ENCODE measurements at regions of chr13 and their contacts with region 1.

Region 1: GRCh38 chr13:102845630-102846260 is at the start of gene ERCC5:
- DNase-seq: peak; percentile 90 to 92
- H3K4me3 ChIP-seq: peak within 1 kb of the TSS; percentile 90
- H3K27ac ChIP-seq: peak within 1 kb of the TSS; percentile 73
- H3K4me1 ChIP-seq: peaks cover 13% of the 10 kb centered on the region; the same call in 1 of the 2 replicates
- H3K27me3 ChIP-seq: no peaks in the 10 kb centered on the region
- CTCF ChIP-seq: no peak
- total RNA-seq, gene ERCC5: 33.9 and 38.2 TPM in 2 replicates

Region 2: DNA sequence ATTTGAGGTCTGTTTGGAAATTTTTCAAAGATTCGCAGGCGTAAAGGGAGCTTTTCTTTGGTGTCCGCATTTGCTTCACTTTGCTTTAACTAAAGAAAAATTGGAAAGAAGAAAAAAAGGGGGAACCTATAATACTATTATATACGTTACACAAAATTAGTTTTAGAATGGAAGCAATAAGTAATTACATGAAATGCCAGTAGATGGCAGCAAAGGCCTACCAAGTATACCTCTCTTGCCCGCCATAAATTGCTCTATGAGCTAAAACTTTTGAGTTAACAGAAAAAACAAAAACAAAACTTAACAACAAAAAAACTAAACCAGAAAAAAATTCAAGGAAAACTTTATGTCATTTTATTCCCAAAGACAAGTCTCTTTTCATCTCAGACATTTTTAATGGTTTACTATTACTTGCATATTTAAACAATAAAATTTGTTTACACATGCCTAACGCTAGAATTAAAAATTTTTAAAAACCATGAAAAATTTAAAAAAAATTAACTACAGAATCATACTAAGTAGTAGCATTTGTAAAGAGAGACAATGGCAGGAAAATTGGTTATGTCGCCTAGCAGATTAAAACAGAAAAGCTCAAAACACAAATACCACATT is 1700.8 kb before region 1 on chr13:
- CTCF ChIA-PET with region 1: no interaction called
- POLR2A ChIA-PET with region 1: no interaction called
- intact Hi-C with region 1: loop called (anchors 10 kb)
- DNase-seq: peak; percentile 7 to 57
- H3K4me3 ChIP-seq: no peak overlapping the region
- H3K27ac ChIP-seq: no peak overlapping the region
- H3K4me1 ChIP-seq: peaks cover 15% of the 10 kb centered on the region
- H3K27me3 ChIP-seq: no peaks in the 10 kb centered on the region
- CTCF ChIP-seq: peak; percentile 87

Region 3: GRCh38 chr13:102197193-102197592 is 648.6 kb before region 1 on chr13:
- CTCF ChIA-PET with region 1: no interaction called
- POLR2A ChIA-PET with region 1: no interaction called
- intact Hi-C with region 1: loop called (anchors 5 kb)
- DNase-seq: no peak
- H3K4me3 ChIP-seq: no peak overlapping the region
- H3K27ac ChIP-seq: no peak overlapping the region
- H3K4me1 ChIP-seq: peaks cover 4% of the 10 kb centered on the region; the same call in 1 of the 2 replicates
- H3K27me3 ChIP-seq: peaks cover 11% of the 10 kb centered on the region
- CTCF ChIP-seq: peak; percentile 32; the same call in 1 of the 2 replicates

Region 4: DNA sequence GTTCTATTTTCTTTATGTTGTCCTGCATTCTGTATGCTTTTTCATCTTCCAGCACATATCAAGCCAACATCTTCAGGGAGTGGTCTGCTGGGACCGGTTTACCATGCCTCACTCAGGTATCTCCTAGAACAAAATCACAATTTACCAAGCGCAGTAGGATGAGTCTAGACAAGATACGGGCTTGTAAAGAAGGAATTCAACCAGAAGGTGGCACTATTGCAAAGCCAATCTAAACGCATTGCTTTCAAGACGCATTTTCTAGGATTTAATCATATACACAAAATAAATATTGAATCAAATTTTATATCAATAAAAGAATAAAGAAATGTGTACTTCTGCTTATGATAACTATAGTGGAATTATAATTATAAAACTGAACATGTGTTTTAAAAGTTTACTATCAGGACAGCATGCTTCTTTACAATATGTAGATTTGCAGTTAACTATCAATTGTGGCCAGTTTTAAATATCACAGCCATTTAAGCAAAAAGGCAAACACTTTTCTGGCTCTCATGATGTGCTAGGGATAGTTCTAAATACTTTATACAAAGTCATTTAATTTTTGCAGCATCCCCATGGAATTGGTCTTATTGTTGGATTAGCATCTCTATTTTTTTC is 265.1 kb before region 1 on chr13:
- CTCF ChIA-PET with region 1: no interaction called
- POLR2A ChIA-PET with region 1: interaction called, 3 read pairs
- intact Hi-C with region 1: loop called (anchors 1 kb)
- DNase-seq: peak; percentile 23 to 65
- H3K4me3 ChIP-seq: no peak overlapping the region
- H3K27ac ChIP-seq: no peak overlapping the region
- H3K4me1 ChIP-seq: no peaks in the 10 kb centered on the region
- H3K27me3 ChIP-seq: peaks cover 10% of the 10 kb centered on the region; the same call in 1 of the 2 replicates
- CTCF ChIP-seq: peak; percentile 92

Region 5: DNA sequence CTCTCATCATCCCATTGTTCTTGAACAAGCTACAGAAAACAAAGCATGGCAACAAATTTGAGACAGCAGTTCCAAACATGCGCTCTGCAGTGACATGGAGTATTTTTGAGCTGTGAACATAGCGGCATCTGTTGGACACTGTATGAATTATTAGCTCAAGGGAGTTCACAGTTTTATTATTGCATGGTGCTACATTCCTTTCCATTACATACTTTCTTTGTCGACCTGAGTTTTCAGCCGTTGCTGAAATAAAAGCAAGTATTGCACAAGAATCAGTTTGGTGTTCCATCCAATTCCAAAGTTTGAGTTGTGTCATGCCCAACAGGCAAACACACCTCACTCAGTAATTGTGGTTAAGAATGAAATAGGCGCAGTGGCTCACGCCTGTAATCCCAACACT is 120.8 kb before region 1 on chr13:
- CTCF ChIA-PET with region 1: no interaction called
- POLR2A ChIA-PET with region 1: no interaction called
- intact Hi-C with region 1: loop called (anchors 1 kb)
- DNase-seq: peak; percentile 12 to 87
- H3K4me3 ChIP-seq: no peak overlapping the region
- H3K27ac ChIP-seq: 0 out of 2 replicates have a peak overlapping the region, but pooled peaks have one; percentile 38
- H3K4me1 ChIP-seq: peaks cover 12% of the 10 kb centered on the region
- H3K27me3 ChIP-seq: no peaks in the 10 kb centered on the region
- CTCF ChIP-seq: peak; percentile 78

Region 6: GRCh38 chr13:102800145-102801041 is 45.4 kb before region 1 on chr13:
- CTCF ChIA-PET with region 1: no interaction called
- POLR2A ChIA-PET with region 1: no interaction called
- intact Hi-C with region 1: loop called (anchors 1 kb)
- DNase-seq: peak; percentile 59 to 81
- H3K4me3 ChIP-seq: peak overlapping the region; percentile 87
- H3K27ac ChIP-seq: no peak overlapping the region
- H3K4me1 ChIP-seq: peaks cover 15% of the 10 kb centered on the region; the same call in 1 of the 2 replicates
- H3K27me3 ChIP-seq: no peaks in the 10 kb centered on the region
- CTCF ChIP-seq: peak; percentile 82

Region 7: DNA sequence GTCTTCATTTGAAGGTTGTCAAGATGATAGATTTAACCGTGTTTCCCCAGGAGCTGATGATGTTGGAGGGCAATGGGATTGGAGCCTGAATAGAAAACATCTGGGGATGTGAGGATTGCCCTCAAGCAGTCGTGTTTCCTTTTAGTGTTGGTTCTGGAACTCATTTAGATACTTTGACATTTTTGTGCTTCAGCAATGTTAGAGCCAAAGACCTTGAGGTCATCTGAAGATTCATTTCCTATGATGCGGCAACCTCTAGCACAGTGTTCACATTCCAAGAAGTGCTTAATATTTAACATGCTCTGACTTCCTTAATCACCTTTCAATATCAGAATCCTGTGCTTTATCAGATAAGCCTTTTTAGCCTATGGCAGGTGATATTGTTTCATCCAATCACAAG is 137.8 kb after region 1 on chr13:
- CTCF ChIA-PET with region 1: no interaction called
- POLR2A ChIA-PET with region 1: no interaction called
- intact Hi-C with region 1: no loop called
- DNase-seq: peak in 1 of 2 experiments; percentile 83
- H3K4me3 ChIP-seq: no peak overlapping the region
- H3K27ac ChIP-seq: peak overlapping the region; percentile 35; the same call in 1 of the 2 replicates
- H3K4me1 ChIP-seq: peaks cover 20% of the 10 kb centered on the region
- H3K27me3 ChIP-seq: no peaks in the 10 kb centered on the region
- CTCF ChIP-seq: no peak

Region 8: GRCh38 chr13:103140001-103140671 is 294.4 kb after region 1 on chr13:
- CTCF ChIA-PET with region 1: no interaction called
- POLR2A ChIA-PET with region 1: no interaction called
- intact Hi-C with region 1: no loop called
- DNase-seq: peak in 1 of 2 experiments; percentile 5
- H3K4me3 ChIP-seq: no peak overlapping the region
- H3K27ac ChIP-seq: no peak overlapping the region
- H3K4me1 ChIP-seq: no peaks in the 10 kb centered on the region
- H3K27me3 ChIP-seq: no peaks in the 10 kb centered on the region
- CTCF ChIP-seq: peak; percentile 70